AG04450 (cell line): ENCODE measurements at regions of chr18 and their contacts with region 1.

Region 1: GRCh38 chr18:68660354-68661183 is 54.3 kb downstream of the TMX3 start:
- DNase-seq: no peak
- H3K4me3 ChIP-seq: no peak overlapping the region
- H3K27ac ChIP-seq: no peak overlapping the region
- H3K27me3 ChIP-seq: no peaks in the 10 kb centered on the region
- CTCF ChIP-seq: peak; percentile 57

Region 2: DNA sequence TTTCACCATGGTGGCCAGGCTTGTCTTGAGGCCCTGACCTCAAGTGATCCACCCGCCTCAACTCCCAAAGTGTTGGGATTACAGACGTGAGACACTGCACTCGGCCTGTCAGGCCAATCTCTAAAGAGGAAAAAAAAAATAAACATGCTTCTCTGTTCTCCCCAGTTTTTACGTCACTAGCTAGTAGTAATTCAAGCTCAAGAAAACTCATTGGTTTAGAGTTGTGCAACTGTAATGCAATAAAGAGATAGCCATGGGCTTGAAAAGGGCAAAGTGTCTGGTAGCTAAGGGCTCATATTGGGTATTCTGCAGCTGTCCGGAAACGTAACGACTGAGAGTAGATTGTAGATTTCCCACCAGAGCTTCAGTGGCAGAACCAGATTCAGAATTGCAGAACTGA is 1031.9 kb before region 1 on chr18:
- CTCF ChIA-PET with region 1: interaction called, 15 read pairs
- POLR2A ChIA-PET with region 1: no interaction called
- DNase-seq: no peak
- H3K4me3 ChIP-seq: no peak overlapping the region
- H3K27ac ChIP-seq: no peak overlapping the region
- H3K27me3 ChIP-seq: no peaks in the 10 kb centered on the region
- CTCF ChIP-seq: no peak

Region 3: GRCh38 chr18:68548904-68549871 is 111.4 kb before region 1 on chr18:
- CTCF ChIA-PET with region 1: no interaction called
- POLR2A ChIA-PET with region 1: no interaction called
- DNase-seq: peak; percentile 67
- H3K4me3 ChIP-seq: no peak overlapping the region
- H3K27ac ChIP-seq: no peak overlapping the region
- H3K27me3 ChIP-seq: no peaks in the 10 kb centered on the region
- CTCF ChIP-seq: no peak

Region 4: DNA sequence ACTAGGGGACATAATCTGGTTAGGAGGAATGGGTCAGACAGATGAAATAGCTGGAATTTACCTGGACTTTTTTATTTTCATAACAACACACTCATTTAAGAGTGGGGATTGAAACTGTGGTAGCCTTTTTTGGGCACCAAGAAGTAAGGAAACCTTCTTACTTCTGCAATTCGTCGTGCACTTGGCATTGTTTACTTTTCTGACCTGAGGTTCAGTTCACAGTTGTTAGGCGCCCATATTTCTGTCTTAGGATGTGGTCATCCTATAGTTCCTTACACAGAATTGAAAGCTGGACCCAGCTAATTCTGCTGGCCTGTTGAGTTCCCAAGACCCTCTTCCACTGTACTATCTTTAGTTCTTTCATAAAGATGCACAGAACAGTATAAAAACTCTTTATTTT is 18.6 kb before region 1 on chr18:
- CTCF ChIA-PET with region 1: interaction called, 10 read pairs
- POLR2A ChIA-PET with region 1: no interaction called
- DNase-seq: no peak
- H3K4me3 ChIP-seq: no peak overlapping the region
- H3K27ac ChIP-seq: no peak overlapping the region
- H3K27me3 ChIP-seq: no peaks in the 10 kb centered on the region
- CTCF ChIP-seq: no peak

Region 5: DNA sequence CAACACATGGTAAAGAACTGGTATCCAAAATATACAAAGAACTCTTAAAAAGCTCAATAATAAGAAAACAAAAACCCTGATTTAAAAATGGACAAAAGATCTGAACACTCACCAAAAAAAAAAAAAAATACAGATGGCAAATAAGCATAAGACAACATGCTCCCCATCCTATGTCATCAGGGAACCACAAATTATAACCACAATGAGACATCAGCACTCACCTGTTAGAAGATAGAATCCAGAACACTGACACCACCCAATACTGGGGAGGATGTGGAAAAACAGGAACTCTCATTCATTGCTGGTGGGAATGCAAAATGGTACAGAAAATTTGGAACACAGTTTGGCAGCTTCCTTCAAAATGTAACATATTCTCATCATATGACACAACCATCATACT is 12.4 kb before region 1 on chr18:
- CTCF ChIA-PET with region 1: interaction called, 24 read pairs
- POLR2A ChIA-PET with region 1: no interaction called
- DNase-seq: no peak
- H3K4me3 ChIP-seq: no peak overlapping the region
- H3K27ac ChIP-seq: no peak overlapping the region
- H3K27me3 ChIP-seq: no peaks in the 10 kb centered on the region
- CTCF ChIP-seq: no peak

Region 6: DNA sequence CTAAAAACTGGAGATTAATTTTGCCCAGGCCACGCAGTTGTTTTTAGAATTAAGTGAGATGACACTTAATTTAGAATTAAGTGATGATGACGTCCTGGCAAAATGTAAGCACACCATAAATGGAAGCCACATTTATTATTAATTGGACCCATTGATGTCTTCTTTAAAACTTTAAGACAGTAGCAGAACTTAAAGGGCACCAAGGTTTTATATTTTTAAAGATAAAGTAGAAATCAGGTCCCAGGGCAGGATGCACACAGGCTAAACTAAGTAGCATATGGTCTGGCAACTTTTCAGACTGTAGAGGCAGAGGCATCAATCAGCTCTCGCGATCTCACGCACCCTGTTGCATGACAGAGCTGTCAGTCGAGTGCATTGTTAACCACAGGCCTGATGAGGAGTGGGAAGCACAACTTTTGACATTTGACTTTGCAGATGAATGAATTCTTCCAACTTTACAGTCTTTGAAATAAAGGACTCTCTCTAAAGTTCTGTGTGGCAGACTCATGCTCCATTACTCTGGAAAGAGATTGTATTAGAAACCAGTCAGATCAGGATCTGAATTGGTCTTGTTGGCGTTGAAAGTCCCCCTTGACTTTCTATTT is 1054.7 kb after region 1 on chr18:
- CTCF ChIA-PET with region 1: no interaction called
- POLR2A ChIA-PET with region 1: no interaction called
- DNase-seq: no peak
- H3K4me3 ChIP-seq: no peak overlapping the region
- H3K27ac ChIP-seq: no peak overlapping the region
- H3K27me3 ChIP-seq: no peaks in the 10 kb centered on the region
- CTCF ChIP-seq: no peak